Right ventricle myocardium inferior (tissue), 1 donor: ENCODE measurements at regions of chr11 and their contacts with region 1.

Region 1: GRCh38 chr11:10735481-10736475 is 15.3 kb upstream of the CTR9 start:
- DNase-seq: peak; percentile 98
- ATAC-seq: peak; percentile 100

Region 2: DNA sequence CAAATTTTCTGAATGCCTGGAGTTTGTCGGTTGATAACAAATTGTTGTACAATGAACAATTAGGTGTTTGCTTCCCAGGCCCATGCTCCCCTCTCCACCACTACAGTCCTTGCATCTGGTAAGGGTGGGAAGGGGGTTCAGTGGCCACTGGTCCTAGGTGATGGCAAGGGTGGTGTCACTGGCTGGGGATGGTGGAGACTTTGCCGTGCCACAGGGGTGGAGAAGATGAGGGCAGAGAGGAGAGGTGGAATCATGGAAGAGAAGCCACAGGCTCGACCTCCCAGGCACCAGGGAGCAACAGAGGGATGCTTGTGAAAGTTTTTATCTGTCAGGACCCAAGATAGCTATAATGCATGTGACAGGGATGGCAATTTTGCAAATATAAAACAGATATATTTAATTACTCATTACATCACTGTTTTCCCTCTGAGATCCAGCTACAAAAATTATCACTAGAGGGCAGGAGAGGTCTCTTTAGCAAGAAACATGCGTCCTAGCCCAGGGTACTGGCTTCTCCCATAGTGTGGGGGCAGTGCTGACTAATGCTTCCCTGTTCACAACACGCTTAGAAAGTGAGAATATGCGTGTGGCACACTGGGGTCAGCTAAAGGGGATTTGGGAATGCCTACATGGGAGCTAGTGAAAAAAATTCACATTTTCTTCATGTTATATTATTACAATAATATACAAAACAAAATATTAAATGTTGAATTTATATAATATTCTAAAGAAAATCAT is 329.8 kb before region 1 on chr11:
- intact Hi-C with region 1: loop called (anchors 1 kb)
- DNase-seq: no peak
- ATAC-seq: peak; percentile 88

Region 3: DNA sequence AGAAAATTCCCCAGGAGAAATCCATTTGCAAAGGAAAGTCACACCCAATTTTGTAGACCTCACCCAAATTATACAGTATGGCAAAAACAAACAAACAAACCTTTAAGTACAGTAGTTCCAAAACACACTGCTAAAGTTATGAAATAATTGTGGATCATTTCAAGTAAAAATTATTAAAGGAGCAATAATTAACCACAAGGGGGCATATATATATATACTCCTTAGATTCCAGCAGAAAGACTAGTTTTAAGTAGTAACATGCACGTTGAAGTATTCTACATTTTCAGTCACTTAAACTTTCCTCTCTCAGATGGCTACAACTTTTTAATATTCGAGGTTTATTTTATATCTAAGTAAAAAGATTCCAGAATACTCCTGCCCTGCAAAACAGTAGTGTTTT is 221.6 kb before region 1 on chr11:
- intact Hi-C with region 1: loop called (anchors 2 kb)
- DNase-seq: no peak
- ATAC-seq: no peak

Region 4: GRCh38 chr11:10540923-10541560 is 194.7 kb before region 1 on chr11 and contains the start of gene RNF141:
- intact Hi-C with region 1: loop called (anchors 1 kb)
- DNase-seq: peak; percentile 98
- ATAC-seq: peak; percentile 100
- total RNA-seq, gene RNF141: 37.9 TPM

Region 5: GRCh38 chr11:10564696-10565318 is 171.0 kb before region 1 on chr11:
- intact Hi-C with region 1: loop called (anchors 5 kb)
- DNase-seq: no peak
- ATAC-seq: no peak

Region 6: GRCh38 chr11:10623797-10624761 is 111.7 kb before region 1 on chr11:
- intact Hi-C with region 1: loop called (anchors 5 kb)
- DNase-seq: no peak
- ATAC-seq: no peak

Region 7: GRCh38 chr11:10844356-10844755 is 108.6 kb after region 1 on chr11:
- intact Hi-C with region 1: no loop called
- DNase-seq: no peak
- ATAC-seq: no peak